CD4-positive, alpha-beta memory T cell (primary cell): ENCODE measurements at regions of chr3 and their contacts with region 1.

Region 1: GRCh38 chr3:9932843-9933560 is 632 bp upstream of the CRELD1 start:
- DNase-seq: peak; percentile 83 to 90 (median 85)
- H3K4me3 ChIP-seq: peak overlapping the region; percentile 13 to 87
- H3K4me3 Mint-ChIP-seq: peak overlapping the region; percentile 95 to 98 (median 97)
- H3K27ac ChIP-seq: peak overlapping the region; percentile 89
- H3K27ac Mint-ChIP-seq: peak overlapping the region; percentile 94 to 100 (median 99)
- H3K4me1 ChIP-seq: peaks cover 34% of the 10 kb centered on the region
- H3K4me1 Mint-ChIP-seq: peaks cover 18 to 55% (median 39%) of the 10 kb centered on the region in 4 donors
- H3K27me3 ChIP-seq: no peaks in the 10 kb centered on the region
- H3K27me3 Mint-ChIP-seq: no peaks in the 10 kb centered on the region

Region 2: GRCh38 chr3:9028134-9028533 is 904.9 kb before region 1 on chr3:
- CTCF ChIA-PET with region 1: no interaction called
- POLR2A ChIA-PET with region 1: no interaction called
- intact Hi-C with region 1: no loop called
- DNase-seq: no peak
- H3K4me3 ChIP-seq: no peak overlapping the region
- H3K4me3 Mint-ChIP-seq: no peak overlapping the region
- H3K27ac ChIP-seq: no peak overlapping the region
- H3K27ac Mint-ChIP-seq: no peak overlapping the region
- H3K4me1 ChIP-seq: no peaks in the 10 kb centered on the region
- H3K4me1 Mint-ChIP-seq: no peaks in the 10 kb centered on the region
- H3K27me3 ChIP-seq: no peaks in the 10 kb centered on the region
- H3K27me3 Mint-ChIP-seq: no peaks in the 10 kb centered on the region

Region 3: DNA sequence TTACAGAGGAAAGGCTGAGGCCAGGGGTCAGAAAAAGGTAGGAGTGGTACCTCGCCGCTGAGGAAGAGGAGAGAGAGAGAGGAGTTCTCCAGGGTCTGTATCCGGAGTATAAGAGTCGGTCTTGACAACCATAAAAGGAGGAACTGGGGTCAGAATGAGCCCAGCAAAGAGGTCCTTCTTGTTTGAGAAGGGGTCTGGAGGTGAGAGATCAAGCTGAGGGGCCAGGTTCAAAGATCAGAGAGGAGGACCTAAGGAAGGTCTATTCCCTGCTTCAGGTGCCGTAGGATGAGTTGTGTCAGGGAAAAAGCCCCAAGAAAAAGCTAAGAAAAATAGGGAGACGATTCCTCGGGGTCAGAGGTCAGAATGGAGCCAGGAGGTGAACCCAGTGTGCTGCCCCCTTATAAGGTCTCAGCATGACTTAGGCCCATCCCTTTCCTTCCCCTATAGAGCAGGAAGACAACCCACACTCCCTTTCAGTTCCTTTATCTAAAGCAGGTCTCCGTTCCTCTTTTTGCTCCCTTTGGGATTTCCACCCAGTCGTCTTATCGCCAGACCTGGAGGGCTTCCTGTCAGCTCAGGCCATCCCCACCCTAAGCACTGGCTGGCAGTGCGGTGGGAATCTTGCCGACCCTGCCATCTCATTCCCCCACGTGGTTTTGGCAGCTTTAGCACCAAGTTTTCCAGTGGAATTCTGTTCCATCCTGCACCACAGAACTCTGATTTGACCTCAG is 283.0 kb before region 1 on chr3:
- CTCF ChIA-PET with region 1: no interaction called
- POLR2A ChIA-PET with region 1: interaction called, 10 read pairs
- intact Hi-C with region 1: no loop called
- DNase-seq: peak in 1 of 5 donors; percentile 46
- H3K4me3 ChIP-seq: peak overlapping the region; percentile 97
- H3K4me3 Mint-ChIP-seq: peak overlapping the region; percentile 91 to 99 (median 96)
- H3K27ac ChIP-seq: peak overlapping the region; percentile 77
- H3K27ac Mint-ChIP-seq: peak overlapping the region; percentile 89 to 97 (median 91)
- H3K4me1 ChIP-seq: peaks cover 37% of the 10 kb centered on the region
- H3K4me1 Mint-ChIP-seq: peaks cover 19 to 50% (median 30%) of the 10 kb centered on the region in 4 donors
- H3K27me3 ChIP-seq: no peaks in the 10 kb centered on the region
- H3K27me3 Mint-ChIP-seq: peaks cover 0 to 1% of the 10 kb centered on the region in 2 donors

Region 4: DNA sequence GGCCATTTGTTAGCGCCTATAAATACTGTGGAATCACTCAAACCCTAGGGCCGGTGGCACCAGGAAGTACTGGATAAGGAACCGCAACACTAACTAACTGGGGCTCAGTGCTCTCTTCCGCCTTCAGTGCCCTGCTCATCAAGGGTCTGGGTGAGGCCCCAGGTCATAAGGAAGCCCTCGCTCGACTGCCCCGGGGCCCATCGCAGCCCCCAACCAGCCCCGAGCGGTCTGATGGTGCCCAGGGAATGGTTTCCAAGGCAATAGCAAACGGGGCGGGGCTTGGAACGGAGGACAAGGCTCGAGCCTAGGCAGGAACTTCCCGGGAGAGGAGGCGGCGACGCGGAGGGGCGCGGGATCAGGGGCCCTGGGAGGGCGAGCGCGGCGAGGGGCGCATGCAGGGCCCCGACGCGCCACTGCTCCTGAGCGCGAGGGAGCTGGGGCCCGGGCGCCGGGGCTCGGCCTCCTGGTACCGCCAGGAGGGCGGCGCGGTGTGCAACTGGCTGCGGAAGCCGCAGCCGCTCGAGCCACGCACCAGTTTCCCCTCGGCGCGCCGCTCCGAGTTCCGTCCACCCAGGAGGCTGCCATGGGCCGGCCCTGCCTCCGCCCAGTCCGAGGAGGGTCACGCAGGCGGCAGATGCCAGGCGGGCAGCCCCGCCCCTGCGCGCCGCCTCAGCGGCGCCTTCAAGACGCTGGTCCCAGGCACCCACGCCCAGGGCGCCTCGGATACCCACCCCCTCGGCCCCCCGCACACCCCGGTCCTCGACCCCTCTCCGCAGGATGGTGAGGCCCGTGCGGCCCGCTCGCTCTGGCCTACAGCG is 123.2 kb before region 1 on chr3 and contains the start of gene TTLL3:
- CTCF ChIA-PET with region 1: interaction called, 5 read pairs
- POLR2A ChIA-PET with region 1: interaction called, 27 read pairs
- intact Hi-C with region 1: no loop called
- DNase-seq: peak; percentile 34 to 62 (median 48)
- H3K4me3 ChIP-seq: peak within 1 kb of the TSS; percentile 72
- H3K4me3 Mint-ChIP-seq: peak within 1 kb of the TSS; percentile 91 to 94 (median 92)
- H3K27ac ChIP-seq: peak within 1 kb of the TSS; percentile 74
- H3K27ac Mint-ChIP-seq: peak within 1 kb of the TSS; percentile 87 to 99 (median 98)
- H3K4me1 ChIP-seq: peaks cover 27% of the 10 kb centered on the region
- H3K4me1 Mint-ChIP-seq: peaks cover 35 to 46% (median 41%) of the 10 kb centered on the region in 4 donors
- H3K27me3 ChIP-seq: no peaks in the 10 kb centered on the region
- H3K27me3 Mint-ChIP-seq: no peaks in the 10 kb centered on the region
- total RNA-seq, gene TTLL3: 81.4 to 91.7 TPM

Region 5: DNA sequence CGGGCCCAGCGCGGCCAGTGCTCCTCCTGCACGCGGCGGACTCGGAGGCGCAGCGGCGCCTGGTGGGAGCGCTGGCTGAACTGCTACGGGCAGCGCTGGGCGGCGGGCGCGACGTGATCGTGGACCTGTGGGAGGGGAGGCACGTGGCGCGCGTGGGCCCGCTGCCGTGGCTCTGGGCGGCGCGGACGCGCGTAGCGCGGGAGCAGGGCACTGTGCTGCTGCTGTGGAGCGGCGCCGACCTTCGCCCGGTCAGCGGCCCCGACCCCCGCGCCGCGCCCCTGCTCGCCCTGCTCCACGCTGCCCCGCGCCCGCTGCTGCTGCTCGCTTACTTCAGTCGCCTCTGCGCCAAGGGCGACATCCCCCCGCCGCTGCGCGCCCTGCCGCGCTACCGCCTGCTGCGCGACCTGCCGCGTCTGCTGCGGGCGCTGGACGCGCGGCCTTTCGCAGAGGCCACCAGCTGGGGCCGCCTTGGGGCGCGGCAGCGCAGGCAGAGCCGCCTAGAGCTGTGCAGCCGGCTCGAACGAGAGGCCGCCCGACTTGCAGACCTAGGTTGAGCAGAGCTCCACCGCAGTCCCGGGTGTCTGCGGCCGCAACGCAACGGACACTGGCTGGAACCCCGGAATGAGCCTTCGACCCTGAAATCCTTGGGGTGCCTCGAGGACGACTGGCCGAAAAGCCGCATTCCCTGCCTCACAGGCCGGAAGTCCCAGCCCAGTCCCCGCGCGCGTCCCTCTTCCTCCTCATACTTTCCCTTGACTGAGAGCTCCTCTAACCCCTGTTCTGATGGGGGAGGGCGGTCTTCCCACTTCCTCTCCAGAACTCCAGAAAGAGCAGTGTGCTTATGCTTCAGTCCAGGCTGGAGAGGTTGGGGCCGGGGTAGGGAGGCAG is 17.5 kb before region 1 on chr3:
- CTCF ChIA-PET with region 1: interaction called, 22 read pairs
- POLR2A ChIA-PET with region 1: interaction called, 53 read pairs
- intact Hi-C with region 1: loop called (anchors 2 kb)
- DNase-seq: peak in 1 of 5 donors; percentile 25
- H3K4me3 ChIP-seq: peak overlapping the region; percentile 36 to 55
- H3K4me3 Mint-ChIP-seq: peak overlapping the region; percentile 62 to 85 (median 79)
- H3K27ac ChIP-seq: no peak overlapping the region
- H3K27ac Mint-ChIP-seq: peak overlapping the region in 1 of 7 donors; percentile 17
- H3K4me1 ChIP-seq: peaks cover 30% of the 10 kb centered on the region
- H3K4me1 Mint-ChIP-seq: peaks cover 13 to 23% (median 17%) of the 10 kb centered on the region in 4 donors
- H3K27me3 ChIP-seq: no peaks in the 10 kb centered on the region
- H3K27me3 Mint-ChIP-seq: peaks cover 0 to 2% of the 10 kb centered on the region in 2 donors

Region 6: DNA sequence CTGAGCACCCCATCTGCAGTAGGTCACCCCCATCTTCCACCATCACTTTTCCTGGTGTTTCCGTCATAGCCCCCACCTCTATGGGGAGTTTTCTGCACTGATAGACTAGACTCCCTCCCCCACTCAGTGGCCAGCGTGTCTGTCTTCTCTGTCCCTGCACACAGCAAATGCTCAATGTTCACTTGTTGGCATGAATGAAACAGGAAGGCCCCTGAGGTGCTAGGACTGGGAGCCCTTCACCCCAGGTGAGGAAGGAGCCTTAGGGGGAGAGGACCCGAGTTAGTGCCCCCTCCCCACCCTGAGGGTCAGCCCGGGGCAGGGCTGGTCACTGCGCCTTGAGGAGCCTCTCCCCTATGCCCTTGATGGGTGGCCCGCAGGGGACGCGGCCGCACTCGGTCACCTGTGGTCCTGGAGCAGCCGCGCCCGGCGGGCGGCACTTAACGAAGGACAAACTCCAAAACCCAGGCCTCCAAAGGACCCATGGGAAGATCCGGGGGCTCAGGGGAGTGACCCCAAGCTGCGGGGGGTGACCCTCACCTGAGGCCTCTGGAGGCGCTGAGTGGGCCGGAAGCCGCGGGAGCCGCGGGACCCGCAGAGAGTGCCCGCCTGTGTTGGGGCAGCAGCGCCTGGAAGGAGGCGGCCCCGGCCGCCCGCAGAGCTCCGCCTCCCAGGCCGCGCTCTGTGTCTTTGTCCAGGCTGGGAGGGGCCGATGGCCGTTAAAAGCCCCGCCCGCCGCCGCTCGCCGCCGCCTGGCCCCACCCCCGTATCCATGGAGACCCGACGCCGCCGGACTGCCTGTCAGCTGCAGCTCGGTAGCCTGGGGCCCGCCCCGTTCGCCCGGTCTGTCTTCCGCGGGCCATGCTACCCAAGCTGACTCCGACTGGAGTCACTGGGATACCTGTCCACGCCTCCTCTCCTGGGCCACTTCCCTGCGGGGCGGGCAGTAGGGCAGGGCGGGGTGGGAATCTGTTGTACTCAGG is 77.8 kb after region 1 on chr3:
- CTCF ChIA-PET with region 1: interaction called, 3 read pairs
- POLR2A ChIA-PET with region 1: interaction called, 4 read pairs
- intact Hi-C with region 1: loop called (anchors 1 kb)
- DNase-seq: peak; percentile 64 to 86 (median 65)
- H3K4me3 ChIP-seq: peak overlapping the region in 1 of 2 donors; percentile 46
- H3K4me3 Mint-ChIP-seq: peak overlapping the region; percentile 67 to 87 (median 75)
- H3K27ac ChIP-seq: no peak overlapping the region
- H3K27ac Mint-ChIP-seq: peak overlapping the region; percentile 11 to 91 (median 58)
- H3K4me1 ChIP-seq: peaks cover 22% of the 10 kb centered on the region
- H3K4me1 Mint-ChIP-seq: peaks cover 8 to 32% (median 17%) of the 10 kb centered on the region in 4 donors
- H3K27me3 ChIP-seq: no peaks in the 10 kb centered on the region
- H3K27me3 Mint-ChIP-seq: no peaks in the 10 kb centered on the region

Region 7: GRCh38 chr3:10263646-10264363 is 330.8 kb after region 1 on chr3:
- CTCF ChIA-PET with region 1: interaction called, 7 read pairs
- POLR2A ChIA-PET with region 1: interaction called, 14 read pairs
- intact Hi-C with region 1: no loop called
- DNase-seq: peak; percentile 66 to 80 (median 71)
- H3K4me3 ChIP-seq: peak overlapping the region in 1 of 2 donors; percentile 22
- H3K4me3 Mint-ChIP-seq: peak overlapping the region; percentile 72 to 91 (median 80)
- H3K27ac ChIP-seq: peak overlapping the region; percentile 64
- H3K27ac Mint-ChIP-seq: peak overlapping the region; percentile 78 to 97 (median 91)
- H3K4me1 ChIP-seq: peaks cover 83% of the 10 kb centered on the region
- H3K4me1 Mint-ChIP-seq: peaks cover 48 to 93% (median 76%) of the 10 kb centered on the region in 4 donors
- H3K27me3 ChIP-seq: no peaks in the 10 kb centered on the region
- H3K27me3 Mint-ChIP-seq: no peaks in the 10 kb centered on the region

Region 8: GRCh38 chr3:10459954-10460754 is 527.2 kb after region 1 on chr3:
- CTCF ChIA-PET with region 1: no interaction called
- POLR2A ChIA-PET with region 1: no interaction called
- intact Hi-C with region 1: no loop called
- DNase-seq: peak; percentile 47 to 80 (median 57)
- H3K4me3 ChIP-seq: no peak overlapping the region
- H3K4me3 Mint-ChIP-seq: no peak overlapping the region
- H3K27ac ChIP-seq: no peak overlapping the region
- H3K27ac Mint-ChIP-seq: no peak overlapping the region
- H3K4me1 ChIP-seq: no peaks in the 10 kb centered on the region
- H3K4me1 Mint-ChIP-seq: peaks cover 0 to 1% (median 0%) of the 10 kb centered on the region in 4 donors
- H3K27me3 ChIP-seq: no peaks in the 10 kb centered on the region
- H3K27me3 Mint-ChIP-seq: peaks cover 0 to 10% of the 10 kb centered on the region in 2 donors